ENCODE measurements at regions of chr19 and their contacts with region 1.

Region 1: GRCh38 chr19:44723952-44724319 is 24.6 kb upstream of the BCL3 start:
- DNase-seq: peak; percentile 77
- H3K4me3 ChIP-seq: no peak overlapping the region
- H3K27ac ChIP-seq: no peak overlapping the region
- H3K4me1 ChIP-seq: peaks cover 27% of the 10 kb centered on the region
- H3K27me3 ChIP-seq: no peaks in the 10 kb centered on the region
- CTCF ChIP-seq: peak; percentile 87 to 93 (median 91)
- POLR2A ChIP-seq: no peak

Region 2: DNA sequence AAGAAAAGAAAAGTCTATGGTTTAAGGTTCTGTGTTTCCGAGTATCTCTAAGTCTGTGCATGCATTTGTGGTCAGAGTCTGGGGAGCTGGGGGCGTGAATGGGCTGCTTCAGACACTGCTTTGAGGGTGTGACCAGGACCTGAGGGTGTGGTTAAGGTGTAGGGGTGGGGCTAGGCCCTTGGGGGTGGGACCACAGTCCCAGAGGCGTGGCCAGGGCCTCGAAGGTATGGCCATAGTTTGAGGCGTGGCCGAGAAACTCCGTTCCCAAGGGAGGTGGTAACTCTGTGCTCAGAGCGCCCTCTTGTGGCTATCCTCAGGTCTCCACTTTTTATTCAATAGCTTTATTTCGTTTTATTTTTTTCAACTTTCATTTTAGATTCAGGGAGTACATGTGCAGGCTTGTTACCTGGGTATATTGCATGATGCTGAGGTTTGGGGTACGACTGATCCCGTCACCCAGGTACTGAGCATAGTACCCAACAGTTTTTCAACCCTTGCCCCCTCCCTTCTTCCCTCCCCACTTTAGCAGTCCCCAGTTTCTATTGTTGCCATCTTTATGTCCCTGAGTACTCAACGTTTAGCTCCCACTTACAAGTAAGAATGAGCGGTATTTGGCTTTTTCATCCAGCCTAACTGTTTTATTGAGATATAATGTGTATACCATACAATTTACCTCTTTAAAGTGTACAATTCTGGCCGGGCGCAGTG is 46.8 kb after region 1 on chr19:
- intact Hi-C with region 1: loop called (anchors 5 kb)
- DNase-seq: peak; percentile 97
- H3K4me3 ChIP-seq: no peak overlapping the region
- H3K27ac ChIP-seq: no peak overlapping the region
- H3K4me1 ChIP-seq: no peaks in the 10 kb centered on the region
- H3K27me3 ChIP-seq: no peaks in the 10 kb centered on the region
- CTCF ChIP-seq: peak; percentile 88 to 95 (median 94)
- POLR2A ChIP-seq: no peak

Region 3: DNA sequence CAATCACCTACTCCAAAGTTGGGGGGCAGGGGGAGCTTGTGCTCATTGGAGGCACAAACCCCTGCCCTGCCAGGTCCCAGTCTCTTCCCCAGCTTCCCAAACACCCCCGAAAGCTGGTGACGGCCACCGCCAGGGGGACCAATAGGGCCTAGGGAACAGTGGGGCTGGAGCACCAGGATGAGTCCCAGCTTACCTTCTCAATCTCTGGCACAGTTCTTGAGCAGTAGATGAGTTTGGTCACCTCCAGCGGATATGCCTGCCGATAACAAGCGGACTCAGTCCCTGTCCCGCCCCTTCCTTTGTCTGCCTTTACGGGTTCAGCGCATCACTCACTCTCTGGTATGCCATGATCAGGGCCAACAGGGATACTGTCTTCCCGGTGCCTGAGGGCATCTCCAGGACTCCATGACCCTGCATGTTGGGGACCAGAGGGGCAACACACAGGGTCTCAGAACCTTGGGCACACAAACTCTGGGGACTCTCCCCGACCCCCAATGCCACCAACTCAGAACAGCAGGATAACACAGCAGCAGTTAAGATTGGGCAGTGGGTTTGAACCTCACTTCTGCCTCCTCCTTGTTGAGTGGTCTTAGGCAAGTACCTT is 644.9 kb after region 1 on chr19:
- intact Hi-C with region 1: no loop called
- DNase-seq: no peak
- H3K4me3 ChIP-seq: no peak overlapping the region
- H3K27ac ChIP-seq: no peak overlapping the region
- H3K4me1 ChIP-seq: peaks cover 6% of the 10 kb centered on the region
- H3K27me3 ChIP-seq: no peaks in the 10 kb centered on the region
- CTCF ChIP-seq: no peak
- POLR2A ChIP-seq: no peak